H1 (cell line): ENCODE measurements at regions of chr12 and their contacts with region 1.

Region 1: DNA sequence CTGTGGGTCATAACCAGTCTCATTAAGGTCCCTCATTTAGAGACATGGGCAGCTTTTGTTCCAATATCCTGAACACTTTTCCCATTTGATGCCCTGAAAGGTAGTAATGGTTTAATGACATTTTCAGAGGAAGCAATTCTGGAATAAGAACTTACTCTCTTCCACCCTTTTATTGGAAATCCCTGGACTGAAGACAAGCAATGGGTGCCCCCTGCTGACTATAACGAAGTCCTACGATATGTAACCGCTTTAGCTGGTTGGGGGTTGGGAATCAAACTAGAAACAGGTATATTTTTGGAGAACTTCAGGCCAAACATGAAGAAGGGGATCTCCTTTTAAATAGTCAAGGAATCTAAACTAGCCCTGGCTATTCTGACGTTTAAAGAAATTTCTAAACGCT is 20.5 kb downstream of the SARNP start:
- DNase-seq: no peak
- H3K4me3 ChIP-seq: no peak overlapping the region
- H3K27ac ChIP-seq: no peak overlapping the region
- H3K4me1 ChIP-seq: no peaks in the 10 kb centered on the region
- H3K27me3 ChIP-seq: no peaks in the 10 kb centered on the region
- CTCF ChIP-seq: peak in 2 of 3 experiments; percentile 52 to 55; a peak in 3 of 4 replicates
- EP300 ChIP-seq: no peak
- POLR2A ChIP-seq: no peak
- RAD21 ChIP-seq: peak; percentile 53 to 64

Region 2: DNA sequence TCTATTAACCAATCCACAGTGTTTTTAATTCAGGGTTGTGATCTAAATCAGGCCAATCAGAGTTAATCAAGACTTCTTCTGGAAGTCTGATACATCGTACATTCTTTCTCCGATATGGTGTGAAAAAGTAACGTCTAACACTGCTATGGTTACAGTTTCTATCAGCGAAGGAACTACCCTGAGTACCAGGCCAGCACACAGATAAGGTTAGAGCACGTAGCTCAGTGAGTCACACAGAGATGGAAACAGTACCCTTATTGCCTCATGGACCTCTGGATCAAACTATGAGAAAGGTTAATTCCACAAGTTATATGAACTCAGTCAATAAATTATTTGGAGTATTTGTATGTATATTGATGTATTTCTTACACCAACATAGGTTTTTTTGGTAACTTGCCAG is 301.6 kb before region 1 on chr12:
- CTCF ChIA-PET with region 1: no interaction called
- POLR2A ChIA-PET with region 1: no interaction called
- DNase-seq: no peak
- H3K4me3 ChIP-seq: no peak overlapping the region
- H3K27ac ChIP-seq: no peak overlapping the region
- H3K4me1 ChIP-seq: no peaks in the 10 kb centered on the region
- H3K27me3 ChIP-seq: no peaks in the 10 kb centered on the region
- CTCF ChIP-seq: no peak
- EP300 ChIP-seq: no peak
- POLR2A ChIP-seq: no peak
- RAD21 ChIP-seq: no peak

Region 3: GRCh38 chr12:55745361-55746146 is 51.5 kb before region 1 on chr12:
- CTCF ChIA-PET with region 1: interaction called, 145 read pairs
- POLR2A ChIA-PET with region 1: interaction called, 6 read pairs
- DNase-seq: peak in 1 of 2 experiments; percentile 77
- H3K4me3 ChIP-seq: peak overlapping the region; percentile 80 to 99 (median 92)
- H3K27ac ChIP-seq: peak overlapping the region; percentile 48; the same call in 1 of the 2 replicates
- H3K4me1 ChIP-seq: peaks cover 8 to 37% (median 23%) of the 10 kb centered on the region in 4 experiments
- H3K27me3 ChIP-seq: no peaks in the 10 kb centered on the region
- CTCF ChIP-seq: no peak
- EP300 ChIP-seq: peak in 1 of 2 experiments; percentile 23; a peak in 1 of 3 replicates
- POLR2A ChIP-seq: peak in 1 of 2 experiments; percentile 19; a peak in 1 of 3 replicates
- RAD21 ChIP-seq: no peak

Region 4: DNA sequence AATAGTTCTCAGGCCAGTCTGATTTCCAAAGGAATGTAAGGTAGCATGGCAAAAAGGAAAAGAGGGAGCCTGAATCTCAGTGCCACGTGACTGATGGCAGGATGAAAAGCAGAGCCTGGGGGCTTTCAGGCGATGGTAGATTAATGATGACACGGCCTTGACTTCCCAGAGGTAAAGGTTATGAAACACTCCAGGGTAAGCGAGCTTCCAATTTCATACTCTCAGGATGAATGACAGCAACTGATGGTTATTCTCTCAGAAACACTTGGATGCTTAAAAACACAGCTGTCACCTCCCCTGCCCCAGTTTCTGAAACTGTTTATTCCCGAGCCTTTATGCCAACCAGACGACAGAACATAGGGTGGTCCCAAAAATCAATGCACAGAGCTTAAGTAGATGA is 25.3 kb before region 1 on chr12:
- CTCF ChIA-PET with region 1: interaction called, 25 read pairs
- POLR2A ChIA-PET with region 1: interaction called, 4 read pairs
- DNase-seq: no peak
- H3K4me3 ChIP-seq: no peak overlapping the region
- H3K27ac ChIP-seq: no peak overlapping the region
- H3K4me1 ChIP-seq: no peaks in the 10 kb centered on the region
- H3K27me3 ChIP-seq: no peaks in the 10 kb centered on the region
- CTCF ChIP-seq: no peak
- EP300 ChIP-seq: no peak
- POLR2A ChIP-seq: no peak
- RAD21 ChIP-seq: no peak

Region 5: GRCh38 chr12:55780685-55781084 is 16.4 kb before region 1 on chr12:
- CTCF ChIA-PET with region 1: interaction called, 17 read pairs
- POLR2A ChIA-PET with region 1: interaction called, 4 read pairs
- DNase-seq: no peak
- H3K4me3 ChIP-seq: no peak overlapping the region
- H3K27ac ChIP-seq: no peak overlapping the region
- H3K4me1 ChIP-seq: no peaks in the 10 kb centered on the region
- H3K27me3 ChIP-seq: no peaks in the 10 kb centered on the region
- CTCF ChIP-seq: no peak
- EP300 ChIP-seq: no peak
- POLR2A ChIP-seq: no peak
- RAD21 ChIP-seq: no peak

Region 6: DNA sequence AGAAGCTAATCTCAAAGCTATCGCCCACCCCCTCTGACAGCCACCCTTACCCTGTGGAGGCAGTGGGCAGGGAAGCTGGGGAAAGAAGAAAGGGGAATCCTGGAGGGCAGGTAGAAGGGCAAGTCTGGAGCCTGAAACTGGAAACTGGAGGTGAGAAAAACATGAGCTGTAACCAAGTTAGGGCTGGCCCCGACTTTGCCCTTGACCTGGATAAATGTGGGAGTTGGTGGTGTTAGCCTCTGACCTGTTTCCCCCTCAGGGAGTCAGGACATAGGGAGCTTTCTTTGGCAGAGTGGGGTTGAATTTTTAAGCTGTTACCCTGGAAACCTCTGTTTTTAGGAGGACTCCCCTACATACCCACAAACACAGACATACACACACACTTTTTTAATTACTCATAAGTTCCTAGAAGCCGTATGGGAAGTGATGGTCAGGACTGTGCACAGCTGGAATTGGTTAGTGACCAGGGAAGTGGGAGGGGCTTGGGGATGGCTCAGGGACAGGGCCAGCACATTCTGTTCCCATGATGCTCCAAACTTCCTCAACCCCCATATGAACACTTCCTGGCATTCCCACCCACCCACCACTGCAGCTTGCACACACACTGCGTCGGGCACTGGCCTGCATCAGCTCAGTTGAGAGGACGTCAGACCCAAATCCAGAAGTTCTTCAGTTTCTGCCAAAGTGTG is 50.7 kb after region 1 on chr12:
- CTCF ChIA-PET with region 1: no interaction called
- POLR2A ChIA-PET with region 1: no interaction called
- DNase-seq: no peak
- H3K4me3 ChIP-seq: no peak overlapping the region
- H3K27ac ChIP-seq: no peak overlapping the region
- H3K4me1 ChIP-seq: peaks cover 0 to 3% (median 0%) of the 10 kb centered on the region in 4 experiments; a peak in 1 of 7 replicates
- H3K27me3 ChIP-seq: no peaks in the 10 kb centered on the region
- CTCF ChIP-seq: no peak
- EP300 ChIP-seq: no peak
- POLR2A ChIP-seq: no peak
- RAD21 ChIP-seq: no peak

Region 7: DNA sequence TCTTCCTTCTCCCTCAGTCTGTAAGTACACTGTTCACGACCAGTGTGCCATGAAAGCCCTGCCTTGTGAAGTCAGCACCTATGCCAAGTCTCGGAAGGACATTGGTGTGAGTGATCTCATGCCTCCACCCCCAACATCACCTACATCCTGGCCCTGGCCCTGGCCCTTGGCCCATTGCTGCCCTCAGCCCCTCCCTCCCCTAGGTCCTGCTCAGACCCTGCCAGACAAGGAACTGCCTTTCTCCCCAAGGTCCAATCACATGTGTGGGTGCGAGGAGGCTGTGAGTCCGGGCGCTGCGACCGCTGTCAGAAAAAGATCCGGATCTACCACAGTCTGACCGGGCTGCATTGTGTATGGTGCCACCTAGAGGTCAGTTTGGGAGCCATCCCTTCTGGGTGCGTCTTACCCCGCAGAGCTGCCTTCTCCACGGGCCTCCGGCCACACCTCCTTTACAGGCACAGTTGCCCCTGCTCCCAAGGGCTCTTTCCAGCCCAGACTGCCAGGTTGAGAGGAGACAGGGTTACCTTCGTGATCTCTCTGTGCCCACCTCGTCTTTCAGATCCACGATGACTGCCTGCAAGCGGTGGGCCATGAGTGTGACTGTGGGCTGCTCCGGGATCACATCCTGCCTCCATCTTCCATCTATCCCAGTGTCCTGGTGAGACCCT is 143.1 kb after region 1 on chr12:
- CTCF ChIA-PET with region 1: no interaction called
- POLR2A ChIA-PET with region 1: no interaction called
- DNase-seq: peak; percentile 83 to 95
- H3K4me3 ChIP-seq: no peak overlapping the region; a peak in 1 of 8 replicates
- H3K27ac ChIP-seq: no peak overlapping the region
- H3K4me1 ChIP-seq: peaks cover 0 to 9% (median 2%) of the 10 kb centered on the region in 4 experiments; a peak in 4 of 7 replicates
- H3K27me3 ChIP-seq: peaks cover 0 to 2% (median 0%) of the 10 kb centered on the region in 4 experiments; a peak in 1 of 7 replicates
- CTCF ChIP-seq: peak; percentile 83 to 100 (median 98)
- EP300 ChIP-seq: no peak
- POLR2A ChIP-seq: 0 out of 3 replicates have a peak, but pooled peaks of 1 of the 2 experiments have one; percentile 22
- RAD21 ChIP-seq: peak; percentile 82 to 88